Activated CD4-positive, alpha-beta T cell treated with anti-CD3 and anti-CD28 coated beads, Interleukin-2, amount 10 ng/mL, durations not matched to agents 24 days and 14 days (primary cell): ENCODE measurements at regions of chr2 and their contacts with region 1.

Region 1: DNA sequence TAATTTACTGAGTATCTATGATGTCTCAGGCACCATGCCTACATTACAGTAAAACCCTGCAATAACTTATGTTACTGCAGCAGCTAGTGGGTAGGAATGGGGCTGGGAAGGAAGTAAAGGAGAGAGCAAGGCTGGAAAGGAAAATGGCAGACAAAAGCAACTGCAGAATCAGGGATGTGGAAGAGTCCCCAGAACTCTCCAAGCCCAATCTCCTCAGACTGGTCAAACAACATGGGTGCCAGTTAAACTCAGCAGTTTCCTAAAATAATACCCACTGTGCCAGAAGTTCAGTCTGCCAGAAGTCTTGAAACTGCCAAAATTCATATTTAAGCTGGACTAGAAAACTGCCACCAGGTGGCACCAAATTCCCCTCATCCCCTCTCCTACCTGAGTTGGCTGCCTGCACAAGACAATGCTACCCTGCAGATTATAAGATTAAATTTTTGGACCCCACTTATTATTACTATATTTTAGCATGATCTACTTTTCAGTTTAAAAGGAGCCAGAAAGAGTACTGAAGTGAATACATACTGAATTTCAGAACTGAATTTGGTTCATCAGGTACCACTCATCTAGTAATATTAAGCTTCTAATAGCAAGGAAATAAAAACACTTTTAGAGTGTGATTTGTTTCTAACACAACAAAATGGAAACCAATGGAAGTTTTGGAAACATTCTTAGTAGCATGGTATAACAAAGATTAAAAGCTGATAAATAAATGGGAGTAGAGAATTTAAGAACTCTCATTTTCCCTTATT is 86.8 kb upstream of the DNER start:
- DNase-seq: peak; percentile 89
- H3K4me3 Mint-ChIP-seq: no peak overlapping the region
- H3K27ac Mint-ChIP-seq: no peak overlapping the region
- H3K4me1 Mint-ChIP-seq: no peaks in the 10 kb centered on the region
- H3K27me3 Mint-ChIP-seq: no peaks in the 10 kb centered on the region

Region 2: DNA sequence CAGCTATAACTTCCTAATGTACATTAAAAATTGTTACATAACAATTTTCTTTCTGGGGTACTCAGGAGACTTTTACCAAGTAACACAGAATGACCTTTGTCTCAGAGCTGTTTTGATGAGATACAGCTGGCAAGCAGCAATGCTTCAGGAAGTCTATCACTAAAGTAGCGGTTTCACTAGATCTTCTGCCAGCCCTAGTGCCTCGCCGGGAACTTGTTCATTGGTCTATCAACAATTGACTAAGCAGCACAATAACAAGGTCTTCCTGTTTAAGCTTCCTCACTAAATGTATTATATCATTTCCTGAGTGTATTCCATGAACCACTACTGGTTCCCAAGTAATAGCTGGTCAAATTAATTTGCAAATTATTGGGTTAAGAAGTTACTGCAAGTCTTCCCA is 51.4 kb after region 1 on chr2:
- intact Hi-C with region 1: loop called (anchors 10 kb)
- DNase-seq: peak; percentile 82
- H3K4me3 Mint-ChIP-seq: no peak overlapping the region
- H3K27ac Mint-ChIP-seq: no peak overlapping the region
- H3K4me1 Mint-ChIP-seq: peaks cover 39% of the 10 kb centered on the region
- H3K27me3 Mint-ChIP-seq: no peaks in the 10 kb centered on the region

Region 3: GRCh38 chr2:229884775-229885699 is 83.9 kb after region 1 on chr2:
- intact Hi-C with region 1: no loop called
- DNase-seq: no peak
- H3K4me3 Mint-ChIP-seq: no peak overlapping the region
- H3K27ac Mint-ChIP-seq: no peak overlapping the region
- H3K4me1 Mint-ChIP-seq: peaks cover 12% of the 10 kb centered on the region
- H3K27me3 Mint-ChIP-seq: no peaks in the 10 kb centered on the region

Region 4: DNA sequence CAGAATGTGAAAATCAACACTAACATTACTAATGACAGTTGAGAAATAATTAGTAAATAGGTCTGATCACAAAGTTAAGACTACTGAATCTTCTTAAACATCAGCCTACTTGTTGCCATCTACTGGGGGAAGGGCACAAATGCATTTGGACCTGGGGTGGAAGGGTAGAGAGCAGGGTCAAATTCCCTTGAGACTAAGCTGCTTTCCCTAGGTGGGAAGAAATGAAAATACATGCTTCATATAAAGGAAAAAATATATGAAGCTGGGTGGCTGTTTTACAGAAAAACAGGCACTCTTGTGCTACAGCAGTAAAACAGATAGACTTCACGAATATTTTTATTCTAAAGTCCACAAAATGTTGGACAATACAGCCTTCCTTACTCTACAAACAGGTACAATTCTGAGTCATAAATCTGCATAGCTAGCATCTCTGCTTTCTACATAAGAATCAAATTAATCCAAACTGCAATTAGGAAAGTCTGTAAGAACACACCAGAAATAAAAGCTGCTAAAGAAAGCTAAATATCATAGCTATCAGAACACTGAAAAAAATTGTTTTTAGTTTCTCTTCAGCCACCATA is 109.7 kb after region 1 on chr2:
- intact Hi-C with region 1: loop called (anchors 2 kb)
- DNase-seq: no peak
- H3K4me3 Mint-ChIP-seq: no peak overlapping the region
- H3K27ac Mint-ChIP-seq: peak overlapping the region; percentile 32
- H3K4me1 Mint-ChIP-seq: peaks cover 30% of the 10 kb centered on the region
- H3K27me3 Mint-ChIP-seq: no peaks in the 10 kb centered on the region